ENCODE measurements at regions of chrX and their contacts with region 1.

Region 1: GRCh38 chrX:85859426-85859825 is 187.9 kb downstream of the CHM start:
- DNase-seq: no peak
- ATAC-seq: no peak
- H3K4me3 ChIP-seq: no peak overlapping the region
- H3K27ac ChIP-seq: no peak overlapping the region
- H3K4me1 ChIP-seq: no peaks in the 10 kb centered on the region
- H3K27me3 ChIP-seq: no peaks in the 10 kb centered on the region
- CTCF ChIP-seq: no peak

Region 2: DNA sequence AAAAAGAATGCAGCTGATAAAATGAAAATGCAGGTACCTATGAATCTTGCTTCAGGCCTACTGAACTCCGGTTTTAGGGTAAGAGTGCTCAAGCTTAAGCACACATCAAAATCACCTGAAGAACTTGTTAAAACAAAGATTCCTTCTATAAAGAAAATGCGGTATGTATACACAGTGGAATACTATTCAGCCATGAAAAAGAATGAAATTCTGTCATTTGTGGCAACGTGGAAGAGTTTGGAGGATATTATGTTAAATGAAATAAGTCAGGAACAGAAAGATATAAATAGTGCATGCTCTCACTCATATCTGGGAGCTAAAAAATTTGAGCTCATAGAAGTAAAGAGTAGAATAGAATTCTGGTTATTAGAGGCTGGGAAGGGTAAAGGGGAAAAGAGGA is 202.0 kb after region 1 on chrX:
- CTCF ChIA-PET with region 1: no interaction called
- POLR2A ChIA-PET with region 1: no interaction called
- in situ Hi-C with region 1: no loop called
- intact Hi-C with region 1: loop called (anchors 5 kb)
- DNase-seq: no peak
- ATAC-seq: no peak
- H3K4me3 ChIP-seq: no peak overlapping the region
- H3K27ac ChIP-seq: no peak overlapping the region
- H3K4me1 ChIP-seq: no peaks in the 10 kb centered on the region
- H3K27me3 ChIP-seq: no peaks in the 10 kb centered on the region; the same call in 1 of the 2 replicates
- CTCF ChIP-seq: no peak

Measured in Panc1 (cell line).